Right cardiac atrium (tissue), 5 donors: ENCODE measurements at regions of chr14 and their contacts with region 1.

Region 1: DNA sequence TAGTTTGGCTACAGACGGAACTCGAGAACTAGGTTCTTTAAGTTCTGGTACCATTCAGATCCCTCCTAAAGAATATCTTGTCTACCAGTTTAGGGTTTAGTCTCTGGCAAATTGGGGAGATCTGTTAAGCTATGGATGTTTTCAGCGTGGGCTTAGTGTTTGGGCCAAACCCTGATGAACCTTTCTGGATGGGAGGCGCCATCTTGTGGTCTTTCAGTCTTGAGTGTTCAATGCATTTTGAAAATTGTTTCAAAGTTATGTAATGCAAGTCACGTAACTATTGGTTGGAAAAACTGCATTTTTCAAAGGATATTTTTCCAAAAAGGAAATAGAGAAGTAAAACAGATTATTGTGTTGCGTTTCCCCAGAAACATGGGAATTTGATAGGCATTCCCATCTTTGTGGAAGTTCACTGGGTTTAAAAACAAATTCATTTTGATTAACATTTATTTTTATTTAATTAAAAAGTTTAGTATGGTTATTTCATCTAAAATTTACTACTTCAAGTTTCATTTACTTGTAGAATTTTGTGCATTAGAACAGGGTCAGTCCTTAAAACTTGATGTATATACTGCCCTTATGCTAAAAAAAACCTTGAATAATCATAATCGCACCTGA is 169.0 kb downstream of the PRIMA1 start:
- DNase-seq: peak in 2 of 3 donors; percentile 16 to 53
- ATAC-seq: no peak
- H3K4me3 ChIP-seq: no peak overlapping the region
- H3K27ac ChIP-seq: no peak overlapping the region
- H3K4me1 ChIP-seq: no peaks in the 10 kb centered on the region
- H3K27me3 ChIP-seq: no peaks in the 10 kb centered on the region

Region 2: GRCh38 chr14:93220509-93220908 is 398.8 kb before region 1 on chr14:
- intact Hi-C with region 1: loop called in 1 of 4 experiments (anchors 10 kb)
- DNase-seq: no peak
- ATAC-seq: no peak
- H3K4me3 ChIP-seq: no peak overlapping the region
- H3K27ac ChIP-seq: no peak overlapping the region
- H3K4me1 ChIP-seq: no peaks in the 10 kb centered on the region
- H3K27me3 ChIP-seq: no peaks in the 10 kb centered on the region

Region 3: GRCh38 chr14:93337143-93337753 is 282.0 kb before region 1 on chr14:
- intact Hi-C with region 1: no loop called
- DNase-seq: no peak
- ATAC-seq: no peak
- H3K4me3 ChIP-seq: no peak overlapping the region
- H3K27ac ChIP-seq: no peak overlapping the region
- H3K4me1 ChIP-seq: no peaks in the 10 kb centered on the region
- H3K27me3 ChIP-seq: no peaks in the 10 kb centered on the region

Region 4: DNA sequence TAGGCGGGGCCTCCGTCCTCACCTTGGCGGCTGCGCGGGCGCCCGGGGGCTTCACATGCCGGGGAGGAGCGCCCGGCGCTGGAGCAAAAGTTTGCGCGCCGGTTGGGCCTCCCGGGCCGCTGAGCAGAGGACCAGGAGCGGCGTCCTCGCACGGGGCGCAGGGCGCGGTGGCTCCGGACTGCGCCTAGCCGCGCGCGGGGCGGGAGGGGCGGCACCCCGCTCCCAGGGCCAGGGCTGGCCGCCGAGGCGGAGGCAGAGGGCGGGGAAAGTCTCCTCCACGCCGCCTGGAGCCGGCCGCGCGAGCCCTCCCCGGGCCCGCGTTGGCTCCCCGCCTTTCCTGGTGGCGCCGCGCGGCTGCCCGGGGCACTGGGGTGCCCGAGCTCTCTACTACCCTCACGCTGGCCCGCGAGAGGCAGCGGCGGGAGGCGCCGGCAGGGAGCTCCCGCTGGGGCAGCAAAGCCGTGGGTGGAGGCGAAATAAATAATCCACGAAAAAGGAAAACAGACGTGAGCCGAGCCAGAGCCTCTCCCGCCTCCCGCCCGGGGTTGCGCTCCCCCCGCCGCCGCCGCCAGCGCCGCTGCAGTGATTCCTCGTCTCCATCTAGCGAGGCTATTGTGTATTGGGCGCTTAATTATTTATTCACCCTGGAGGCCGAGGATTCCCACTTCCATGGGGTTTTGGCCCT is 169.4 kb after region 1 on chr14:
- intact Hi-C with region 1: no loop called
- DNase-seq: peak; percentile 55 to 87 (median 83)
- ATAC-seq: peak; percentile 92 to 95
- H3K4me3 ChIP-seq: peak overlapping the region; percentile 56
- H3K27ac ChIP-seq: peak overlapping the region; percentile 70
- H3K4me1 ChIP-seq: no peaks in the 10 kb centered on the region
- H3K27me3 ChIP-seq: no peaks in the 10 kb centered on the region

Region 5: DNA sequence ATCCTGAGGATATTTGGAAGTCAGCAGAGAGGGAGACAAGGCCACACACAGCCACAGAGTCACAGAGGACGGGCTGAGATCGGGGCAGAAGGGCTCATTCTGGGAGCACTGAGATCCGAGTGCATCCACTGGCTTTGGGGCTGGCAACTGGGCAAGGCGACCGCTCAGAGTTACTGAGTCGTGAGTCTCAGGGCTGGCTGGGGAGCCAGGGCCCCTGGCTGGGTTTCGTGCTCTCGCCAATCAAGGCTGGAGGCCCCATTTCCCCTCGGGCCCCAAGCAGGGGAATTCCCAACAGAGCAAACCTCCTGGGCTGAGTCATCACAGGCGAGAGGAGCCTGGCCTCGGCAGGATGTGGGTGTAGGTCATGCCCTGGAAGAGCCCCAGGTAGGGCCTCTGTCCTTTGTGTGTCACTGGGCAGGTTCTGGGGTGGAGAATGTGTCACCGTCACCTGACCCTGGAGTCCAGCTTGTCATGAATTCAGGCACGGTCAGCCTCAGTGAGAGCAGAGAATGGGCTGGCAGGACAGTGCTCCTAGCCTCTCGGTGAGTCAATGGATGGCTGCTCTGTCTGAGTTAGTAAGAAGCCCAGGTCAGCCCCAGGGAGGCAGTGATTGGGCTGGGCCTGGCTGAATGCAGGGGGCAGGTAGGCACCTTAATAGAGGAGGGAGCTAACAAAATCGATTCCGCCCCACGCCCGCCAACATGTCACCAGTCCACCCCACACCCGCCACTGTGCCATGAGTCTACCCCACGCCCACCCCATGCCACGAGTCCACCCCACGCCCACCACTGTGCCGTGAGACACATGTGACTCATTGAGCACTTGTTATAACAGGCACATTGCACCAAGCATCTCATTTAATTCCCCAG is 340.2 kb after region 1 on chr14:
- intact Hi-C with region 1: no loop called
- DNase-seq: peak in 2 of 3 donors; percentile 33 to 68
- ATAC-seq: peak in 1 of 2 donors; percentile 37
- H3K4me3 ChIP-seq: no peak overlapping the region
- H3K27ac ChIP-seq: peak overlapping the region; percentile 31
- H3K4me1 ChIP-seq: peaks cover 24% of the 10 kb centered on the region
- H3K27me3 ChIP-seq: no peaks in the 10 kb centered on the region